ENCODE measurements at regions of chr20 and their contacts with region 1.

Region 1: GRCh38 chr20:62642040-62642665 is at the start of gene SLCO4A1:
- DNase-seq: peak; percentile 90
- H3K4me3 Mint-ChIP-seq: peak within 1 kb of the TSS; percentile 85
- H3K27ac Mint-ChIP-seq: peak within 1 kb of the TSS; percentile 78
- H3K4me1 Mint-ChIP-seq: peaks cover 16% of the 10 kb centered on the region
- H3K27me3 Mint-ChIP-seq: peaks cover 16% of the 10 kb centered on the region
- total RNA-seq, gene SLCO4A1: 47.6 and 49.8 TPM in 2 replicates

Region 2: DNA sequence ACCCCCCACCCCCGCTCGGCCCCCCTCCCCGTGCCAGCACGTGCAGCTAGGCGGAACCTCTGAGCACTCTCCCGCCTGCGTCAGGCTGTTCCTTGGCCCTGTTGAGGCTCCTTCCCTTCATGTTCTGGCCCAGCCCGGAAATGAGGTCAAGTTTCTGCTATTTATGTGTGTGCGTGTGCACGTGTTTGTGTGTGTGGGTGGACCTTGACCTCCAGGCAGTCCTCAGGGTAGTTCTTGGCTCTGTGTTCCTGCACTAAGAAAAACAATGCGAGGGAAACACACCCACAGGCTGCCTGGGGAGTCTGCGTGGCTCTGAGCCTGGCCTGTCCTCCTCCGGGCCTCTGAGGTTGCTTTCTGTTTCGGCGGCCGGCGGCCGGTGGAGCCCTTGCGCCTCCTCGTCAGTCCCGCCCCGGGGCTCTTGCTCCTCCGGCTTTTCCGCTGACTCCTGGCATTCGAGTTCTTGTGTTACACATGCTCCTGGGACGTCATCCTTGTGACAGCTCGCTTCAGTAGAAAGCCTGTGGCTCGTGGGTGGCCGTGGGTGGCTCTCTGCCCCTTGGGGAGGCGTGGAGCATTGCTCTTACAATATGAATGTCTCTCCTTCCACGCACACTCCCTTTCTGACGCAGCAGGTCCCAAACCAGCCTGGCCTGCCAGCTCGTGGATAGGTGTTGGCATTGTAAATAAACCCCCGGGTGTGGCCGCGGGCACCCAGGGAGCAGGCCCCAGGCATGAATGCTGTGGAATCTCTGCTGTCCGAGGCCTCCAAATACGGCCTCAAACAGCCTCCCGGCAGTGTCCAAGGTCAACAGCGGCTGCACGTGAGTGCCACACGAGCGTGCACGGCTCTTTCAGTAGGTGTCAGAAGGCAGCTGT is 10.1 kb after region 1 on chr20:
- intact Hi-C with region 1: loop called (anchors 1 kb)
- DNase-seq: peak; percentile 63
- H3K4me3 Mint-ChIP-seq: peak overlapping the region; percentile 76
- H3K27ac Mint-ChIP-seq: peak overlapping the region; percentile 94
- H3K4me1 Mint-ChIP-seq: peaks cover 37% of the 10 kb centered on the region
- H3K27me3 Mint-ChIP-seq: no peaks in the 10 kb centered on the region

Region 3: DNA sequence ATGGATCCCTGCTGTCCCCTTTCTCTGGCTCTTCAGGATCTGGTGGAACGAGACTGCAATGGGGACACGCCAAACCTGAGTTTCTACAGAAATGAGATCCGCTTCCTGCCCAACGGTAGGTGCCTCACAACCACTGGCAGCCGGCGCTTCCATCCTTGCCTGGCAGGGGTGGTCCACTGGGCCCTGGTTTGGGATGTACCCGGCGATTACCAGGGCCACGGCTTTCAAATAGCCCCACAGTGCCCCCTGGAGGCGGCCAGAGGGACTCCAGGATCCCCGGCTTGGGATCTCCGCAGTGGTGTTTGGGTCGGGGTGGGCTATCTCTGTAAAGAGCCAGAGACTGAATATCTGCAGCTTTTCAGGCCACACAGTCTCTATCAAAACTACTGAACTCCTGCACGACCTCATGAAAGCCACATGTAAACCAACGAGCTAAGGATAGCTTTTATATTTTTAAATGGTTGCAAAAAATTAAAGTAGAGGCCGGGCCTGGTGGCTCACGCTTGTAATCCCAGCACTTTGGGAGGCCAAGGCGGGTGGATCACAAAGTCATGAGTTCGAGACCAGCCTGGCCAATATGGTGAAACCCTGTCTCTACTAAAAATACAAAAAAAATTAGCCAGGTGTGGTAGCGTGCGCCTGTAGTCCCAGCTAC is 166.2 kb after region 1 on chr20:
- intact Hi-C with region 1: loop called (anchors 1 kb)
- DNase-seq: peak; percentile 59
- H3K4me3 Mint-ChIP-seq: peak overlapping the region; percentile 65
- H3K27ac Mint-ChIP-seq: no peak overlapping the region
- H3K4me1 Mint-ChIP-seq: peaks cover 21% of the 10 kb centered on the region
- H3K27me3 Mint-ChIP-seq: no peaks in the 10 kb centered on the region